Caco-2 (cell line): ENCODE measurements at regions of chr1 and their contacts with region 1.

Region 1: DNA sequence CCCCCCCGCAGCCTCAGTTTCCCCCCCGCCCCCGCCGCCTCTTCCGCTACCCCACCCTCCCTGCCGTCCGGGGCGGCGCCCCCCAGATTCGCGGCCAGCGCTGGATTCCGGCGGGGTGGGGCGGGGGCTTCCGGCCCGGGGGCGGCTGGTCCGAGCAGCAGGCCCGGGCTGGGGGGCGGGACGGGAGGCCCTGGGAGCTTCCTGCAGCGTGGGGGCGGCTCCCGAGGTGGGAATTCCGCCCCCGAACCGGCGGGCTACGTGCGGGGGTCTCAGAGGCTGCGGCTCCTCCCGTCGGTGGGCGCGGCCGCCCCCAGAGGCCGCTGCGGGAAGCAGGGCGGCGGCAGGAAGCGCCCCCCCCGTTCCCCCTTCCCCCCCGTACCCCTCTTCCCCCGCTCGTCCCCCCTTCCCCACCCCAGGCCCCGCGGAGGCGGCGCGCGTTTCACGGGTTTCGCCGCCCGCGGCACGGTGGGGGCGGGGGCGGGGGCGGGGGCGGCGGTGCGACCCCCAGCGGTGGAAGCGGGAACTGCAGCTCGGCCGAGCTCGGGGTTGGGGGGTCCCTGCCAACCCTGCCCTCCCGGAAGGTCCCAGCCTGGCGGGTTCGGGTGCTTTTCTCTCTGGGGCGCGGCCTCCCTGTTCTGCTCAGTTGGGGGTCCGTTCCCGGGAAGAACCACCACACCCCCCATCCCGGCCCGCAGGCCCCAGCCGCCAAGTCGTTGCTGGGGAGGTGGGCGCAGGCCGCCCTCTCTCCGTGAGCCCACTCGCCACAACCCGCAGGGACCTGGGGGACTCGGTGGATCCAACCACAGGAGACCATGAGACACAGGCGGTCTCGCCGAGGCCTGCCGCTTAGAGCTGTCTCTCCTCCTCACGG is 76.3 kb downstream of the MORN1 start:
- DNase-seq: peak; percentile 63 to 68
- H3K4me3 ChIP-seq: peak overlapping the region; percentile 51
- H3K4me3 Mint-ChIP-seq: peak overlapping the region; percentile 56
- H3K27ac Mint-ChIP-seq: peak overlapping the region; percentile 32
- H3K4me1 ChIP-seq: peaks cover 21% of the 10 kb centered on the region; the same call in 1 of the 2 replicates
- H3K4me1 Mint-ChIP-seq: no peaks in the 10 kb centered on the region
- H3K27me3 ChIP-seq: no peaks in the 10 kb centered on the region
- H3K27me3 Mint-ChIP-seq: no peaks in the 10 kb centered on the region
- CTCF ChIP-seq: peak; percentile 58 to 93

Region 2: GRCh38 chr1:2227346-2228153 is 87.5 kb before region 1 on chr1:
- CTCF ChIA-PET with region 1: no interaction called
- POLR2A ChIA-PET with region 1: no interaction called
- intact Hi-C with region 1: loop called (anchors 10 kb)
- DNase-seq: peak; percentile 92 to 96
- H3K4me3 ChIP-seq: peak overlapping the region; percentile 84
- H3K4me3 Mint-ChIP-seq: peak overlapping the region; percentile 76
- H3K27ac Mint-ChIP-seq: no peak overlapping the region
- H3K4me1 ChIP-seq: no peaks in the 10 kb centered on the region
- H3K4me1 Mint-ChIP-seq: peaks cover 9% of the 10 kb centered on the region
- H3K27me3 ChIP-seq: no peaks in the 10 kb centered on the region
- H3K27me3 Mint-ChIP-seq: no peaks in the 10 kb centered on the region
- CTCF ChIP-seq: no peak

Region 3: GRCh38 chr1:2255420-2256369 is 59.3 kb before region 1 on chr1:
- CTCF ChIA-PET with region 1: no interaction called
- POLR2A ChIA-PET with region 1: no interaction called
- intact Hi-C with region 1: loop called (anchors 10 kb)
- DNase-seq: no peak
- H3K4me3 ChIP-seq: no peak overlapping the region
- H3K4me3 Mint-ChIP-seq: no peak overlapping the region
- H3K27ac Mint-ChIP-seq: no peak overlapping the region
- H3K4me1 ChIP-seq: peaks cover 3% of the 10 kb centered on the region
- H3K4me1 Mint-ChIP-seq: peaks cover 6% of the 10 kb centered on the region
- H3K27me3 ChIP-seq: no peaks in the 10 kb centered on the region
- H3K27me3 Mint-ChIP-seq: no peaks in the 10 kb centered on the region
- CTCF ChIP-seq: no peak

Region 4: GRCh38 chr1:2345223-2346080 is 30.4 kb after region 1 on chr1:
- CTCF ChIA-PET with region 1: no interaction called
- POLR2A ChIA-PET with region 1: no interaction called
- intact Hi-C with region 1: no loop called
- DNase-seq: no peak
- H3K4me3 ChIP-seq: no peak overlapping the region
- H3K4me3 Mint-ChIP-seq: no peak overlapping the region
- H3K27ac Mint-ChIP-seq: no peak overlapping the region
- H3K4me1 ChIP-seq: no peaks in the 10 kb centered on the region
- H3K4me1 Mint-ChIP-seq: no peaks in the 10 kb centered on the region
- H3K27me3 ChIP-seq: no peaks in the 10 kb centered on the region
- H3K27me3 Mint-ChIP-seq: no peaks in the 10 kb centered on the region
- CTCF ChIP-seq: no peak

Region 5: GRCh38 chr1:2474933-2475371 is 159.9 kb after region 1 on chr1:
- CTCF ChIA-PET with region 1: no interaction called
- POLR2A ChIA-PET with region 1: no interaction called
- intact Hi-C with region 1: no loop called
- DNase-seq: no peak
- H3K4me3 ChIP-seq: no peak overlapping the region
- H3K4me3 Mint-ChIP-seq: no peak overlapping the region
- H3K27ac Mint-ChIP-seq: no peak overlapping the region
- H3K4me1 ChIP-seq: peaks cover 6% of the 10 kb centered on the region; the same call in 1 of the 2 replicates
- H3K4me1 Mint-ChIP-seq: no peaks in the 10 kb centered on the region
- H3K27me3 ChIP-seq: no peaks in the 10 kb centered on the region
- H3K27me3 Mint-ChIP-seq: no peaks in the 10 kb centered on the region
- CTCF ChIP-seq: no peak